Activated naive CD4-positive, alpha-beta T cell treated with anti-CD3 and anti-CD28 coated beads for 36 hours (primary cell): ENCODE measurements at regions of chr6 and their contacts with region 1.

Region 1: DNA sequence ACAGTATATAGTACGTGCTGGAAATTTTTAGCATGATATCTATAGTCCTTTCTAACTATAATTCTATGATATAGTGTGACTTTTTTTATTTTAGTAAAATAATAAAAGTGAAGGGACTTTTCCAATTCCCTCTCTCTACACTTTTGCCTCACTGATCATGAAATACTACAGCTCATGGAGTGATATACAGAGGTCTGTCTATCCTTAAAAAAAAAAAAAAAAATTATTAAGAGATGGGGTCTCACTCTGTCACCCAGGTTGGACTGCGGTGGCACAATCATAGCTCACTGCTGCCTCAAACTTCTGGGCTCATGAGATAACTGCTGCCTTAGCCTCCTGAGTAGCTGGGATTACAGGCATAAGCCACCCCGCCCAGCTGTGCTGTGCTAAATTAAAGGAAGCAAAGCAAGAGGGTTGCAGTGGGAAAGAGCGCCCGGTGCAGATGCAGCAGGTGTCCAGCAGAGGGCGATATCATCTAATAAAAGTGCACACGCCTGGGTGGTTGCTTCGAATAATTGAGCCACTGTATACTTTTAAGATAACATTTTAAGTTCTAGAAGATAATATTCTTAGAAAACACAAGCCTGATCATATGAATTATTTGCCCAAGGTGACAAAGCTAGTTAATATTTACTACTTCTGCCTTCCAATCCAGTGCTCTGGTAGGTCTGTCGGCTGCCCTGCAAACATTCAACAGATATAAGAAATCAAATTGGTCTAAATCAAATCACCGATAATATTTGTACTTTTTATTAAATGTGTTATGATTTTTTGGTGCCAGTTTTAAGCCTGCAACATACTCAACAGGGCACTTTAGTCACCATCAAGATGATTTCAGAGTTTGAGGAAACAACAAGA is 94.9 kb upstream of the NT5E start:
- DNase-seq: peak; percentile 71
- H3K4me3 Mint-ChIP-seq: no peak overlapping the region
- H3K27ac Mint-ChIP-seq: no peak overlapping the region
- H3K4me1 Mint-ChIP-seq: no peaks in the 10 kb centered on the region
- H3K27me3 Mint-ChIP-seq: peaks cover 2% of the 10 kb centered on the region

Region 2: GRCh38 chr6:85537055-85537494 is 182.1 kb after region 1 on chr6:
- CTCF ChIA-PET with region 1: interaction called, 9 read pairs
- intact Hi-C with region 1: loop called (anchors 1 kb)
- DNase-seq: no peak
- H3K4me3 Mint-ChIP-seq: no peak overlapping the region
- H3K27ac Mint-ChIP-seq: no peak overlapping the region
- H3K4me1 Mint-ChIP-seq: no peaks in the 10 kb centered on the region
- H3K27me3 Mint-ChIP-seq: no peaks in the 10 kb centered on the region

Region 3: GRCh38 chr6:85678602-85679444 is 323.8 kb after region 1 on chr6:
- CTCF ChIA-PET with region 1: no interaction called
- intact Hi-C with region 1: loop called (anchors 5 kb)
- DNase-seq: peak; percentile 96
- H3K4me3 Mint-ChIP-seq: peak overlapping the region; percentile 97
- H3K27ac Mint-ChIP-seq: peak overlapping the region; percentile 96
- H3K4me1 Mint-ChIP-seq: peaks cover 31% of the 10 kb centered on the region
- H3K27me3 Mint-ChIP-seq: no peaks in the 10 kb centered on the region

Region 4: DNA sequence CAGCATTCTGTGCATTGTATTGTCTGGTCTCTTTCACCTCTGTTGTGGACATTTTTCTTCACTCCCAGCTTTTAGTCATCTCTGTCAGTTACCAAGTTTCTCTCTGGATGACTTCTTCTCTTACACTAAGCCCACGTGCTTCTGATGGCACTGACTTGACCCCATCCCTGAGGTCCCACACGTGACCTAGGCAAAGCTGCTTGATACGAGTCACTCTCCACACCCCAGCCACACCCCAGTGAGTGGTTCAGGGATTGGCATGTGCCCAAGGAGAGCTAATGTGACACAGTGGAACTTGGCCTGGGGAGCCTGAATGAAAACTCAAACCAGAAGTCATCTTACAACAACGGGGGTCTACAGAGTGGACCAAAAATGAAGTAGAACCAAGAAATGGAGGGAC is 1614.6 kb after region 1 on chr6:
- CTCF ChIA-PET with region 1: no interaction called
- intact Hi-C with region 1: no loop called
- DNase-seq: no peak
- H3K4me3 Mint-ChIP-seq: no peak overlapping the region
- H3K27ac Mint-ChIP-seq: no peak overlapping the region
- H3K4me1 Mint-ChIP-seq: no peaks in the 10 kb centered on the region
- H3K27me3 Mint-ChIP-seq: peaks cover 2% of the 10 kb centered on the region